Activated B cell treated with CpG ODN at 0.5 μM for 24 hours (primary cell): ENCODE measurements at regions of chr2 and their contacts with region 1.

Region 1: DNA sequence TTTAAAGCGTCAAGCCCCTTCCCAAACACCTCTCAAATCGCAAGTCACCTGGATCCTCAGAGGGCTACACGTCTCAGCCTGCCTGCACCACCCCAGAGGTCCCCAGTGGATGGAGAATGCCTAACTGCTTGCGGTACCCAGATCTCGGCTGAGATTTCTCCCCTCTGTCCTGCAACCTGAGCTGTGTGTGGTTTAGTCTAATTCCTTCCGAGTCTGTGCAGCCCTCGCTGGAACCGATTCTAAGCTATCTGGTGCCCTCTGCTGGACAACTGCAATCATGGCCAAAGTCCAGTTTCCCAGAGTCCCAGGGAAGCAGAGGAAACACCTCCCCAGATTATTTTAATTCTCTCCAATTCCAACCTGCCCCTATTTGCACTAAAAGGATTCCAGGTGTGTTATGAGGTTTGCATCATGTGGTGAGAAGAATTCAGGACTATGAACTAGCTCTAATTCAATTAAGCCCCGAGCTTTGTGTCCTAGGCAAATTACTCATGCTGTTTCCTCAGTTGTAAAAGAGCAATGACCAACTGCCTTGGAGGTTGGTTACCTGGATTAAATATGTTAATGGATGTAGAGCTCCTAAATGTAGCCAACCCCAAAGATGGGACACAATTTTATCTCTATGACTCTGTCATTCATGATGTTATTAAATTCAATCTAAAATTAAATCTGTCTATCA is 276.1 kb upstream of the NCKAP5 start:
- DNase-seq: peak; percentile 26
- ATAC-seq: peak; percentile 68
- H3K4me3 Mint-ChIP-seq: no peak overlapping the region
- H3K27ac Mint-ChIP-seq: no peak overlapping the region
- H3K4me1 Mint-ChIP-seq: no peaks in the 10 kb centered on the region
- H3K27me3 Mint-ChIP-seq: peaks cover 7% of the 10 kb centered on the region
- CTCF ChIP-seq: peak; percentile 63

Region 2: GRCh38 chr2:132267105-132267497 is 1577.3 kb before region 1 on chr2:
- CTCF ChIA-PET with region 1: interaction called, 3 read pairs
- POLR2A ChIA-PET with region 1: no interaction called
- intact Hi-C with region 1: loop called (anchors 5 kb)
- DNase-seq: no peak
- ATAC-seq: no peak
- H3K4me3 Mint-ChIP-seq: no peak overlapping the region
- H3K27ac Mint-ChIP-seq: no peak overlapping the region
- H3K4me1 Mint-ChIP-seq: peaks cover 3% of the 10 kb centered on the region
- H3K27me3 Mint-ChIP-seq: peaks cover 3% of the 10 kb centered on the region
- CTCF ChIP-seq: no peak

Region 3: GRCh38 chr2:132547074-132547687 is 1297.2 kb before region 1 on chr2:
- CTCF ChIA-PET with region 1: interaction called, 27 read pairs
- POLR2A ChIA-PET with region 1: no interaction called
- intact Hi-C with region 1: loop called (anchors 1 kb)
- DNase-seq: no peak
- ATAC-seq: no peak
- H3K4me3 Mint-ChIP-seq: no peak overlapping the region
- H3K27ac Mint-ChIP-seq: no peak overlapping the region
- H3K4me1 Mint-ChIP-seq: no peaks in the 10 kb centered on the region
- H3K27me3 Mint-ChIP-seq: no peaks in the 10 kb centered on the region
- CTCF ChIP-seq: peak; percentile 41

Region 4: GRCh38 chr2:133518646-133519344 is 325.6 kb before region 1 on chr2:
- CTCF ChIA-PET with region 1: interaction called, 20 read pairs
- POLR2A ChIA-PET with region 1: no interaction called
- intact Hi-C with region 1: loop called (anchors 1 kb)
- DNase-seq: no peak
- ATAC-seq: no peak
- H3K4me3 Mint-ChIP-seq: no peak overlapping the region
- H3K27ac Mint-ChIP-seq: no peak overlapping the region
- H3K4me1 Mint-ChIP-seq: no peaks in the 10 kb centered on the region
- H3K27me3 Mint-ChIP-seq: no peaks in the 10 kb centered on the region
- CTCF ChIP-seq: no peak

Region 5: DNA sequence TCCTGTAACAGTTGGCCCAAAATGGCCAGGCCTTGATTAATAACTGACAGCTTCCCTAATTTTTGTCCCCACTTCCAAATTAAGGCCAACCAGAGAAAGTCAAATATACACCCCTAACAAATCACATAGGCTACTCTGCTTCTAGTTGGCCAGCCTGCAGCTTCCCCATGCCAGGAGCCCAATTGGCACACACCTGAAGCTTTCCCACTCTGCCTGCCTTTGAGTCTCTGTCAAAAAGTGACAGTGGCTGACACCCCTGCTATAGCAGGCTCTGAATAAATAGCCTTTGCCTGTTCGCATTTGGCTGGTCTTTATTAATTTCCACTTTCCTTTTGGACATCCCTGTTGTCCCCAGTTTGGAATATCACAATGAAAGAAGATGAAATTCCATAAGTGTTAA is 19.5 kb before region 1 on chr2:
- CTCF ChIA-PET with region 1: interaction called, 10 read pairs
- POLR2A ChIA-PET with region 1: no interaction called
- intact Hi-C with region 1: no loop called
- DNase-seq: no peak
- ATAC-seq: no peak
- H3K4me3 Mint-ChIP-seq: no peak overlapping the region
- H3K27ac Mint-ChIP-seq: no peak overlapping the region
- H3K4me1 Mint-ChIP-seq: no peaks in the 10 kb centered on the region
- H3K27me3 Mint-ChIP-seq: peaks cover 12% of the 10 kb centered on the region
- CTCF ChIP-seq: no peak